Heart right ventricle (tissue), 16 donors: ENCODE measurements at regions of chr11 and their contacts with region 1.

Region 1: DNA sequence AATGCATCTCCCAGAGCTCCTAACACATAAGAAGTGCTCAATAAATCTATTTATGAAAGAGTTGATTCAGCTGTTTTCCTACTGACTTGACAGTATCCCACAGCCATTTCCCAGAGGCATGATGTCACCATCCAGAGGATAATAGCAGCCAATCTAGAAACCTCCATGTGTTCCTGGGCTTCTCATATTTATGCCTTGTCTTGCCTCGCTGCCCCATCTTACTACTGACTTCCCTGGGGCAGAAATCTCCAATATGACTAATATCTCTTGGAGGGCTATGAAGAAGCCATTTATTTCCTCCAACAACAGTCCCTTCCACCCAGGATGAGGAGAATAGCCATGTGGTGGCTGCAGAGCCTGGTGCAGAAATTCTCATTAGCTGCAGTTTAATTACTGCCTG is 115.4 kb upstream of the NAV2 start:
- DNase-seq: no peak
- ATAC-seq: peak in 1 of 8 donors; percentile 43
- H3K4me3 ChIP-seq: no peak overlapping the region
- H3K27ac ChIP-seq: no peak overlapping the region
- H3K4me1 ChIP-seq: peaks cover 0 to 30% (median 18%) of the 10 kb centered on the region in 9 donors
- H3K27me3 ChIP-seq: no peaks in the 10 kb centered on the region
- CTCF ChIP-seq: no peak

Region 2: DNA sequence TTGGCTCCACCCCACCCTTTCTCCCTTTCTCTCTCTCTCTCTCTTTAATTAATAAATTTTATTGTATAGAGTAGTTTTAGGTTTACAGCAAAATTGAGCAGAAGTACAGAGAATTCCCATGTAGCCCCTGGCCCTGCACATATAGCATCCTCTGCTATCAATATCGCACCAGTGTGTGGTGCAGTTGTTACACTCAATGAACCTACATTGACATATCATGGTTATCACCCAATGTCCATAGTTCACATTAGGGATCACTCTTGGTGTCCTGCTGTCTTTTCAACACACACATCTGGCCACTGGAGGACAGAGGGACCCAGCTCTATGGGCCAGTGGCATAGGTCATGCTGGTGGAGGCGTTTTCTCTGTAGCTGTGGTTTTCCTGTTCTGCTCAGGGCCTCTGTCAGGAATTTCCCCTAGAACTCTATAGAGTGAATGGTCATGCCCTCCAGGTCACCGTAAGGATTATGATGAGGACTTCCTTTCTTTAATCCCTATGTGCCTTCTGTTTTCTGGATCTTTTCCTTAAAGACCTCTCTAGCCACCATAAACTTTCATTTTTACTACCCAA is 17.2 kb after region 1 on chr11:
- intact Hi-C with region 1: loop called in 1 of 10 experiments (anchors 1 kb)
- DNase-seq: no peak
- ATAC-seq: no peak
- H3K4me3 ChIP-seq: no peak overlapping the region
- H3K27ac ChIP-seq: no peak overlapping the region
- H3K4me1 ChIP-seq: peaks cover 0 to 7% (median 0%) of the 10 kb centered on the region in 9 donors
- H3K27me3 ChIP-seq: no peaks in the 10 kb centered on the region
- CTCF ChIP-seq: peak in 1 of 9 donors; percentile 8

Region 3: GRCh38 chr11:20035701-20036620 is 438.7 kb after region 1 on chr11:
- intact Hi-C with region 1: no loop called
- DNase-seq: no peak
- ATAC-seq: peak in 3 of 8 donors; percentile 22 to 43 (median 36)
- H3K4me3 ChIP-seq: no peak overlapping the region
- H3K27ac ChIP-seq: peak overlapping the region in 1 of 10 donors; percentile 36
- H3K4me1 ChIP-seq: peaks cover 0 to 61% (median 18%) of the 10 kb centered on the region in 9 donors
- H3K27me3 ChIP-seq: no peaks in the 10 kb centered on the region
- CTCF ChIP-seq: no peak